Activated CD4-positive, alpha-beta T cell treated with anti-CD3 and anti-CD28 coated beads for 36 hours (primary cell): ENCODE measurements at regions of chr4 and their contacts with region 1.

Region 1: GRCh38 chr4:98995183-98996055 is at the start of gene METAP1:
- DNase-seq: peak; percentile 98
- ATAC-seq: peak; percentile 91
- H3K4me3 Mint-ChIP-seq: peak within 1 kb of the TSS; percentile 81
- H3K27ac Mint-ChIP-seq: peak within 1 kb of the TSS; percentile 95
- H3K4me1 Mint-ChIP-seq: peaks cover 40% of the 10 kb centered on the region
- H3K27me3 Mint-ChIP-seq: no peaks in the 10 kb centered on the region
- total RNA-seq, gene METAP1: 67.9 to 75.2 TPM

Region 2: DNA sequence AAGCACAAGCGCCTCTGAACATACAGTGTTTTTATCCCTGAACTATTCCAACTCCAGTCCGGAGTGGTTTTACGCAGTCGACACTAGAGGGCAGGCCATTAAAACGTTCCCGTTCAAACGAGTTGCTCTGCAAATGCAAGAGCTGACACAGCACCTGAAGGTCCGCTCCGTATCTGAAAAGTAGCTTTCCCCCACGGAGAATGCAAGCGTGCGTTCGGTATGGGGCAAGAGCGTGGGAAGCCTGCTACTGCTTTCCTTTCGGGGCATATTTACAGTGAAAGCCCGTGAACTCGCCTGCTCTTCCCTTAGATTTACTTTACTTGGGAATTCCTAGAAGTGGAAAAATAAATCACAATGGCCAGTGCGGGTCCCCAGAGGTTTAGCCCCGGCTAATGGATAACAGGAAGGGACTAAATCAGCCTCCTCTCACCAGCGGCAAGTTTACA is 527.8 kb before region 1 on chr4:
- CTCF ChIA-PET with region 1: interaction called, 4 read pairs
- POLR2A ChIA-PET with region 1: no interaction called
- intact Hi-C with region 1: loop called (anchors 5 to 10 kb)
- DNase-seq: peak; percentile 85
- ATAC-seq: peak; percentile 95
- H3K4me3 Mint-ChIP-seq: peak overlapping the region; percentile 52
- H3K27ac Mint-ChIP-seq: peak overlapping the region; percentile 37
- H3K4me1 Mint-ChIP-seq: peaks cover 23% of the 10 kb centered on the region
- H3K27me3 Mint-ChIP-seq: no peaks in the 10 kb centered on the region

Region 3: DNA sequence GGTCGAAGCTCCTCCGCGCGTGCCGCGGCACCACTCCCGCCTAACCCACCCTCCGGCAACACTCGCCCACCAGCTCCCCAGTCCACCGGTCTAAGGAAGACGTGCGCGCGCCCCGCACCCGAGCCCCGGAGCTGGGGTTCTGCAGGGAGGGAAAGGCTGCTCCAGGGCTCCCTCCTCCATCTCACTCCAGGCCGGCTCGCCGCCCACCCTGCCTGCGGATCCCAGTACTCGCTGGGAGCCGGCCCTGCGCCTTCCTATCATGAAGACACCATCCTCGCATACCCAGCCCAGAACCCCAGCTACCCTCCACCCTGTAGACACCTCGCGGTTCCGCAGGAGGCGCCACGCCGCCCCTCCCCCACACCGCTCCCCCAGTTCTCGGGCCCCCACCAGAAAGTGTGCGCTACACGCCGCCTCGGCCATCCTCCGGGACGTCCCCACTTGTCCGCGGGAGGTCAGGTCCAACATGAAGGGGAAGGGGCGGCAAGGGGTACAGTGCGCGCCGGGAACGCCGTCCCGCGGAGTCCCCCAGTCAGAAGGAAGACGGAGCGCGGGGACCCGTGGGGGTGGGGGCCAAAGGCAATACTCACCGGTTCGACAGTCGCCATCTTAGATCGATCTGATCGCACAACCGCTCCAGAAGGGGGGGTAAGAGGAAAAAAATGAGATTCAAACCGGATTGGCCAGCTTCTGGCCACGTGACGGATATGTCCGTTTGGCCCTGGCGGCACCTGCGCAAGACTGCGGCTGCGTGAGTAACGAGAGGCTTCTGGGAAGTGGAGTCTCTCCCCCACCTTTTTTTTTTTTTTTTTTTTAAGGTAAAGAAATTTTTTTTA is 66.7 kb before region 1 on chr4 and contains the start of gene EIF4E:
- CTCF ChIA-PET with region 1: interaction called, 14 read pairs
- POLR2A ChIA-PET with region 1: interaction called, 26 read pairs
- intact Hi-C with region 1: loop called (anchors 1 kb)
- DNase-seq: peak; percentile 98
- ATAC-seq: peak; percentile 80
- H3K4me3 Mint-ChIP-seq: peak within 1 kb of the TSS; percentile 92
- H3K27ac Mint-ChIP-seq: peak within 1 kb of the TSS; percentile 100
- H3K4me1 Mint-ChIP-seq: peaks cover 47% of the 10 kb centered on the region
- H3K27me3 Mint-ChIP-seq: no peaks in the 10 kb centered on the region
- total RNA-seq, gene EIF4E: 132 to 149 TPM

Region 4: DNA sequence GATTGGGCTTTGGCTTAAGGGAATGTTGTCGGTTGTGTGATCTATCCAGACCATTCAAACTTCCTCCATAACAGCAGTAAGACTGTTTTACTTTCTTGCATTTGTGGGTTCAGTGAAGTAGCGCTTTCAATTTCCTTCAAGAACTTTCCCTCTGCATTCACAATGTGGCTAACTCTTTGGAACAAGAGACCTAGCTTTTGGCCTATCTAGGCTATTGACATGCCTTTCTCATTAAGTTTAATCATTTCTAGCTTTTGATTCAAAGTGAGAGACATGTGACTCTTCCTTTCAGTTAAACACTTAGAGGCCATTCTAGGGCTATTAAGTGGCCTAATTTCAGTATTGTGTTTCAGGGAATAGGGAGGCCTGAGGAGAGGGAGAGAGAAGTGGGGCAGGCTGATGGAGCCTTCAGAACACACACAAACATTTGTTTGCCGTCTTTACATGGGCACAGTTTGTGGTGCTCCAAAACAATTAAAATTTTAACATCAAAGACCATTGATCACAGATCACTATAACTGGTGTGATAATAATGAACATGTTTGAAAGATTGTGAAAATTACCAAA is 59.1 kb after region 1 on chr4:
- CTCF ChIA-PET with region 1: interaction called, 91 read pairs
- POLR2A ChIA-PET with region 1: interaction called, 13 read pairs
- intact Hi-C with region 1: loop called (anchors 1 kb)
- DNase-seq: no peak
- ATAC-seq: peak; percentile 23
- H3K4me3 Mint-ChIP-seq: no peak overlapping the region
- H3K27ac Mint-ChIP-seq: peak overlapping the region; percentile 63
- H3K4me1 Mint-ChIP-seq: peaks cover 44% of the 10 kb centered on the region
- H3K27me3 Mint-ChIP-seq: no peaks in the 10 kb centered on the region

Region 5: GRCh38 chr4:99405433-99406115 is 410.2 kb after region 1 on chr4:
- CTCF ChIA-PET with region 1: interaction called, 4 read pairs
- POLR2A ChIA-PET with region 1: no interaction called
- intact Hi-C with region 1: loop called (anchors 2 to 10 kb)
- DNase-seq: peak; percentile 72
- ATAC-seq: peak; percentile 50
- H3K4me3 Mint-ChIP-seq: no peak overlapping the region
- H3K27ac Mint-ChIP-seq: no peak overlapping the region
- H3K4me1 Mint-ChIP-seq: peaks cover 7% of the 10 kb centered on the region
- H3K27me3 Mint-ChIP-seq: peaks cover 1% of the 10 kb centered on the region